Dorsolateral prefrontal cortex (tissue), 120 donors: ENCODE measurements at regions of chr19 and their contacts with region 1.

Region 1: DNA sequence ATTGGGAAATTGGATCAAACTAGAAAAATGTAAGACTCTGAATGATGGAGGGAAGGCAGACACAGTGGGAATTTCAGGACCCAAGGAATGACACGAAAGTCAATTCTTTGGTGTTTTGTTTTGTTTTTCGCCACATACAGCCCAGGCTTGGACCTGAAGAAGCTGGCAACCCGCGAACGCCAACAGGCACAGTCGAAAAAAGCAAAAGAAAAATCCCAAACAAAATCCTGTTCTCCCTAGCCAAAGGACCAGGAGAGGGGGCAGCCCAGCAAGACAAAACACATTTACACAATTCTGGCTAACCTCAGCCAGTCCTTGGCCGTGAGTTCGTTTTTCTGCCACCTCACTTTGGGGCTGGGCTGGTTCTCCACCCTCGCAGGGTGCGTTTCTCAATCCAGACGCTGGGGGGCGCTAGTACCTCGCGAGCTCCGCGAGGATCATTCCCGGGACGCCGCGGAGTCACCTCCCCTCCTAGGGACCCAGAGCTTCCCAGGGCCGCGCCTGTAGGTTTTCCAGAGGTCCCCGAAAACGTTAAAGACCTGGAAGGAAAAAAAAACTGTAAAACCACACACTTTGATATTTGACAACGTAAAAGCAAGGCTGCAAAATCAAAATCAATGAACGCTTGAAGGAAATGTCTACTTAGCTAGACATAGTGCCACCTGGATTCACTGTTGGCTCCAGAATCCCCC is 34.9 kb upstream of the TPM4 start:
- DNase-seq: peak in 9 of 10 donors; percentile 70 to 87 (median 79)
- H3K4me3 ChIP-seq: peak overlapping the region in 53 of 59 donors; percentile 1 to 63 (median 37)
- H3K27ac ChIP-seq: peak overlapping the region in 2 of 59 donors; percentile 13
- H3K27me3 ChIP-seq: peaks cover 0 to 7% (median 0%) of the 10 kb centered on the region in 45 donors
- CTCF ChIP-seq: peak; percentile 83 to 100 (median 98)

Region 2: GRCh38 chr19:15629003-15629880 is 412.2 kb before region 1 on chr19:
- intact Hi-C with region 1: loop called in 1 of 2 experiments (anchors 2 kb)
- DNase-seq: peak; percentile 57 to 80 (median 70)
- H3K4me3 ChIP-seq: peak overlapping the region in 8 of 59 donors; percentile 4 to 48 (median 34)
- H3K27ac ChIP-seq: no peak overlapping the region
- H3K27me3 ChIP-seq: peaks cover 0 to 32% (median 7%) of the 10 kb centered on the region in 45 donors
- CTCF ChIP-seq: peak; percentile 61 to 96 (median 91)

Region 3: DNA sequence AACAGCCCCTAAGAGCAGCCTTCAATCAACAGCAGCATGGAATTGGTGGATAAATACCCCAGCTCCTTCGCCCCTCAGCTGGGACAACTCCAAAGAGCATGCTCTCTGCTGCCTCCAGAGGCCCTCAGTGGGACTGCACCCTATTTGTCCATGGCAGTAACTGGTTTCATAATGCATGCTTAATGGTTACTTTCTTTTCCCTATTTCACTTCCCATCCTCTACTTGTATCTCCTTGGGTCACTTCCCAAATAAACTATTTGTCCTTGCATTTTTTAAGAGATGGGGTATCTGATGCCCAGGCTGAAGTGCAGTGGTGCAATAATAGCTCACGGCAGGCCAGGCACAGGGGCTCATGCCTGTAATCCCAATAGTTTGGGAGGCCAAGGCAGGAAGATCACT is 21.3 kb after region 1 on chr19:
- intact Hi-C with region 1: no loop called
- DNase-seq: peak in 2 of 10 donors; percentile 29 to 53
- H3K4me3 ChIP-seq: no peak overlapping the region
- H3K27ac ChIP-seq: no peak overlapping the region
- H3K27me3 ChIP-seq: no peaks in the 10 kb centered on the region
- CTCF ChIP-seq: peak; percentile 40 to 79 (median 64)

Region 4: DNA sequence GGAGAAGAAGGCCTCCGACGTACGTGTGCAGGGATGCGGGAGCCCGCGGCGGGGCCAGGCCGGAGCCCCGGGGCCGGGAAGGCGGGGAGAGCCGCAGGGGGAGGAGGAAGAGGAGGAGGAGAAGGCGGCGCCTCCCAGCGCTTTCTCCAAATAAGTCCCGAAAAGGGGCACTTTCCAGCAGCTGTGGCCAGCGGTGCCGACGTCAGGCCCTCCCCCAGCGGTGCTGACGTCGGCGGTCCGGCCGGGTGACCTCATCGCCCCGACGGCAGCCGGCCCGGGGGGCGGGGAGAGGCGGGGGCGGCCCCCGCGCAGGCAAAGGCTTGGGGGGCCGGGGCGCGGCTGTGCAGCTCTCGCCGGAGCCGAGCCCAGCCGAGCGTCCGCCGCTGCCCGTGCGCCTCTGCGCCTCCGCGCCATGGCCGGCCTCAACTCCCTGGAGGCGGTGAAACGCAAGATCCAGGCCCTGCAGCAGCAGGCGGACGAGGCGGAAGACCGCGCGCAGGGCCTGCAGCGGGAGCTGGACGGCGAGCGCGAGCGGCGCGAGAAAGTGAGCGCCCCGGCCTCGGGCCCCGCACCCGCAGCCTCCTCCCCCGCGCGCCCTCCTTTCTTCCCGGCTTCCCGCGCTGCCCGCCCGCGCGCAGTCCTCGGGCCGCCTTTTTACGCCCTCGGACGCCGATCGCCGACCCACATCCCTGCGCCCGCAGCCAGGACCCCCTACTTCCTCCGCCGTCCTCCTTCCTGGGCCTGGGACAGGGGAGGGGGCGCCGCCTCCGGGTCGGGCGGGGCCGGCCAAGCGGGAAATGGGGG is 34.9 kb after region 1 on chr19 and contains the start of gene TPM4:
- intact Hi-C with region 1: loop called in 1 of 2 experiments (anchors 5 kb)
- DNase-seq: peak; percentile 64 to 92 (median 86)
- H3K4me3 ChIP-seq: peak within 1 kb of the TSS; percentile 66 to 96 (median 88)
- H3K27ac ChIP-seq: peak within 1 kb of the TSS; percentile 84 to 100 (median 98)
- H3K27me3 ChIP-seq: no peaks in the 10 kb centered on the region
- CTCF ChIP-seq: peak in 4 of 56 donors; percentile 5 to 49 (median 12)
- total RNA-seq, gene TPM4: 76.8 to 148 (median 102) TPM

Region 5: DNA sequence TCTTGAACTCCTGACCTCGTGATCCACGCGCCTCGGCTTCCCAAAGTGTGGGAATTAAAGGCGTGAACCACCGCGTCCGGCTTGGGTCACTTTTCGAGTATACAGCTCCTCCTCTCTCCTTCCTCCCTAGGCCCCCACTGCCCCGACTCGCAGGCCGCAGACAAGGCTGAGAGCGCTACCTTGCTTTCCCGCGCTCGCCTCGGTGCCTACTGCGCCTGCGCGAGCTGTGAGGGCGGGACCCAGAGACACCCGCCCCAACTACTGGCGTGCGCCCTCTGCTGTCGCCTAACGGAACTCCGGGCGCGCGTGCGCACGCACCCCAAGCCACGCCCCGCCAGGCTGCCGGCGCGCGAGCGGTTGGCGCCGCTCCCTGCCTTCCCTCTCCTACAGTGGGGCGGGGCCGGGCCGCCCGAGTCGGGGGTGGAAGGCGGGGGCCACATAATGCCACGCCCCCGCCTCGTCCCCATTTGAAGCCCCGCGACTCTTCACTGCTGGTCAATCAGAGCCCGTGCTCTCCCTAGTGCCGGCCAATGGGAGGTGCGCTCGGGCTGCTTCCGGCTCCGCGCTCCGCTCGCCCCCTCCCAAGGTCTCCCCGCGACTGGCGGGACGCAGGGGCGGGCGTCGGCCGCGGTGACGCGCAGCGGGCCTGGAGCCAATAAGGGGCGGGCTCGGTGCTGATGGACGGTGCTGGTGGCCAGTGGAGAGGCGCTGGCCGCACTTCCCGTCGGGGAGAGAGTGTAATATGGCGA is 69.9 kb after region 1 on chr19 and contains the start of gene RAB8A:
- intact Hi-C with region 1: loop called (anchors 2 to 5 kb)
- DNase-seq: peak; percentile 97 to 100 (median 98)
- H3K4me3 ChIP-seq: peak within 1 kb of the TSS; percentile 60 to 97 (median 89)
- H3K27ac ChIP-seq: peak within 1 kb of the TSS in 58 of 59 donors; percentile 21 to 96 (median 88)
- H3K27me3 ChIP-seq: no peaks in the 10 kb centered on the region
- CTCF ChIP-seq: peak; percentile 89 to 100 (median 98)
- total RNA-seq, gene RAB8A: 21.7 to 52.7 (median 32.7) TPM

Region 6: DNA sequence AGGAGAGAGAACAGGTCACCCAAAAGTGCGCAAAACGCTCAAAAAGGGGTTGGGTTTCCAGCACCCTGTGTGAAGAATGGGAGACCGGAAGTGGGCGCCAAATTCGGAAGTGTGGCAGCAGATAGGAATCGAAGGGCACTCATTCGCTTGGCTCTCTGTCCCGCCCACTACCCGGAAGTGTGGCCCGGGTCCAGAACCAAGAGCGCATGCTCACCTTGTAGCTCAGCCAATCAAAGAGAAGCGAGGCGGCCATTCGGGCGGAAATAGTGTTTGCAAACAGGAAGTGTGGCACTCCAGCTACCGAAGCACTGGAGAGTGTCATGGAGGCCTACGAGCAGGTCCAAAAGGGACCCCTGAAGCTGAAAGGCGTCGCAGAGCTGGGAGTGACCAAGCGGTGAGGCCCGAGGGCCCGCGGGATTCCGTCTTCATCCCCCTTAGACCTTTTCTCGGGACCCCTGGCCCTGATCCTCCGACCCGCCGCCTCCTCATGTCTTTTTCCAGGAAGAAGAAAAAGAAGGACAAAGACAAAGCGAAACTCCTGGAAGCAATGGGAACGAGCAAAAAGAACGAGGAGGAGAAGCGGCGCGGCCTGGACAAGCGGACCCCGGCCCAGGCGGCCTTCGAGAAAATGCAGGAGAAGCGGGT is 143.8 kb after region 1 on chr19 and contains the start of gene FAM32A:
- intact Hi-C with region 1: loop called (anchors 2 kb)
- DNase-seq: peak; percentile 94 to 98 (median 96)
- H3K4me3 ChIP-seq: peak within 1 kb of the TSS; percentile 67 to 100 (median 95)
- H3K27ac ChIP-seq: peak within 1 kb of the TSS in 52 of 59 donors; percentile 12 to 93 (median 78)
- H3K27me3 ChIP-seq: peaks cover 0 to 5% (median 0%) of the 10 kb centered on the region in 45 donors
- CTCF ChIP-seq: peak; percentile 24 to 76 (median 58)
- total RNA-seq, gene FAM32A: 31.2 to 70.0 (median 51.2) TPM

Region 7: DNA sequence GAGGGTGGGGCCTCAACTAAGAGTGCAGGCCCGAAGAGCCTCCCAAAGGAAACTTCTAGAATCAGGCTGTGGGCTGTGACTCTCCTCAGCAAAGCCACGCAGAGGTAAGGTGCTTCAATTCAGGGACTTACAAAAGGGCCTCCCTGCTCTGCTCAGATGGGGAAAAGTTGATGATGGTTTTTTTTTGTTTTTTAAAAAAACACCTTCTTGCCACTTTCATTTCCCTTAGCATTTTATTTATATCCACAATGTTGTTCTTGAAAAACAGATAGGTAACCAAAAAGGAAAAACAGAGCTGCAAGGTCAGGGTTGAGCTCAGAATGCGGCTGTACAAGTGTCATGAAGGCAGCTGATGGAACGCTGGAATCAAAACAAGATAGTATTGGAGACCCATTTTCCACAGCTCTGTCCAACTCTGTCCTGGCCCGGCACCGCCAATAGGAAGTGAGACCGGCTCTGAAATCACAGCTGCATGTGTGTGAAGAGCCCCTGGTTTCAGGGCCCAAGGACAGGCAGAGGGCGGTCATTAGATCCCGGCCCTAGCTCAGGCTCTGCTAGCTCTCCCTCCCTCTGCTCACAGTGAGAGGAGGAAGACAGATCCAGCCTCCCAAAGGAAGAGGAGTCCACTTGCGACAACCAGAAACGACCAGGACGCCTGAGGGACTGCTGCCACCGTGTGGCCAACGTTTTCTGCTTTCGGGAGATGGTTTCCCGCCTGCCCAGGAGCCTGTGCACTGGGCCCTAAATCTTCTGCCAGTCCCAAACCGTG is 341.5 kb after region 1 on chr19:
- intact Hi-C with region 1: loop called in 1 of 2 experiments (anchors 10 kb)
- DNase-seq: peak; percentile 57 to 86 (median 80)
- H3K4me3 ChIP-seq: peak overlapping the region in 2 of 59 donors; percentile 4 to 25
- H3K27ac ChIP-seq: peak overlapping the region in 56 of 59 donors; percentile 11 to 91 (median 72)
- H3K27me3 ChIP-seq: no peaks in the 10 kb centered on the region
- CTCF ChIP-seq: peak; percentile 62 to 90 (median 81)